ENCODE measurements at regions of chr2 and their contacts with region 1.

Region 1: DNA sequence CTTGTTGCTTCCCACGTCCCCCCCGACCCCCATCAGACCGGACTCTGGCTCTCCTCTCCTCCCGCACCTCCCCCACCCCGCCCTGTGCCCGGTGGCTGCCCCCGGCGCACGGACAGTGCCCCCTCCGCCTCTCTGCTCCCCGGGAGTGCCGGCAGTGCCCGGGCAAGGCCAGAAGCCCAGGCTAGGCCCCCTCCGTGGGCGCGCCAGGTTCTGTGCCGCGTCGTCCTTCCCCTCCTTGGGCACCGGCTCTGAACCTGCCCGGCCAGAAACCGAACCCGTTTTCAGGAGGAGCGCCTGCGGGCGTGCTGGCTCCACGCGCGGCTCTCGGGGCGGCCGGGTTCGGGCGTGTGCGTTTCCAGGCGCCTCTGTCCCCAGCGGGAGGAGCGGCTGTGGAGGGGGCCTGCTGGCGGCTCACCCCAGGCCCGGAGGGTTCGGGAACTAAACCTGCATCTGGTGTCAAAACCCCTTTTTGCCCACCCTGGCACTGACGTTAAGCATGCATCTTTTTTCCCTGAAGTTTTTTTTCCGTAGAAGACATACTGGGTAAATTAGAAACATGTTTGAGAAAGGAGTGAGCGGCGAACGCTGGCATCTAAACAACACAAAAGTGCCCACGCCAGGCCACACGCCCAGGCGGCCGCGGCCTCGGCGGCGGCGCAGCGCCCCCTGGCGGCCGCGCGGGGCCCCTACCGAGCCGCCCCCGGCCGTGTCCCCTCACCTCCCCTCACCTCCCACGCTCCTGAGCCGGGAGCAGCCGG is 123.9 kb upstream of the SLC1A4 start:
- DNase-seq: peak; percentile 63 to 83 (median 72)
- H3K4me3 ChIP-seq: peak overlapping the region; percentile 57
- H3K27ac ChIP-seq: peak overlapping the region; percentile 65 to 68
- H3K4me1 ChIP-seq: peaks cover 1% of the 10 kb centered on the region
- H3K27me3 ChIP-seq: no peaks in the 10 kb centered on the region
- CTCF ChIP-seq: peak; percentile 28 to 92 (median 90)
- EP300 ChIP-seq: no peak
- POLR2A ChIP-seq: peak; percentile 38

Region 2: DNA sequence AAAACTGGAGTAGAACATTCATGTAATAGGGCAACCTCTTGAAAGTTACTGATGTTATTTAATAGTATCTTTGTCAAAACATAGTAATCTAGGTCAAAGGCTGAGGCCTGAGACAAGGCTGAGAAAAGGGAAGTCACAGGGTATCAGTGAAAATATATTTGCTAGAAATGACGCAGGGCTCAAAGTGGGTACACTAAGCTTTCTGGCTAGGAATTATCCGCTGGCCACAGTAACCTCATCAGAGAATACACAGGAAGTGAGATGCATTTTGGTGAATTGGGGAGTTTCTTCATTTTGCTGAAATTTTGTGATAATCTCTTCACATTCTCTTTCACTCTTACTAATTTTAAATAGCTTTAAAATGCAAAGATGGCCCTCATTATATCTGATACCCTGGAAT is 1607.8 kb before region 1 on chr2:
- intact Hi-C with region 1: no loop called
- DNase-seq: no peak
- H3K4me3 ChIP-seq: no peak overlapping the region
- H3K27ac ChIP-seq: no peak overlapping the region
- H3K4me1 ChIP-seq: no peaks in the 10 kb centered on the region
- H3K27me3 ChIP-seq: no peaks in the 10 kb centered on the region
- CTCF ChIP-seq: no peak
- EP300 ChIP-seq: no peak
- POLR2A ChIP-seq: no peak

Region 3: DNA sequence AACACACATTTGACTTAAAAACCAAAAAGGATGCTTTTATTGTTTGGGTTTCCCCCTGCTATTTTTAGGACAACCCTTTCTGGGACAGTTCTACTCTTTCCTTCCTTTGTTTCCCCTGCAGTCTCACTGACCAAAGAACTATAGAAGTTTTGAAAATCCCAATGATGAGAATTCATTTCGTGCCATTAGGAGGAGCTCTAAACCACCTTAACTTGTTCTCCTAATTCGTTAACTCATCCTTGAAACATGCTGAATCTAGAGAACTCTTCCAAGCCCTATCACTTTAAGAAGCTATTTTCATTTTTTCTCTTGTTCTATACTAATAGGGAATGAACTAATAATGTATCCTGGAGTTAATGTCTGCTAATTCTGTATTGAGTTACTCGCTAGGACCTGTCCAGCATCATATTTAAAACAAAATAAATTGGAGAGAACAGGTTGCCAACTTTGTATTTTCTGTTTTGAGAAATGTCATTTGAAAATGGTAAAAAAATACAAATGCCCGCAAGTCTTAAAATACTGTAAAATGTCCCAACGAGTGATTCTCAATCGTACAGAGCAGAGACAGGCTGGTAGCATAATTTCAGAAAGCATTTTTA is 278.3 kb before region 1 on chr2:
- intact Hi-C with region 1: loop called in 3 of 4 experiments (anchors 2 to 5 kb)
- DNase-seq: no peak
- H3K4me3 ChIP-seq: no peak overlapping the region
- H3K27ac ChIP-seq: no peak overlapping the region
- H3K4me1 ChIP-seq: no peaks in the 10 kb centered on the region
- H3K27me3 ChIP-seq: no peaks in the 10 kb centered on the region
- CTCF ChIP-seq: peak; percentile 50 to 75 (median 54)
- EP300 ChIP-seq: no peak
- POLR2A ChIP-seq: no peak

Region 4: DNA sequence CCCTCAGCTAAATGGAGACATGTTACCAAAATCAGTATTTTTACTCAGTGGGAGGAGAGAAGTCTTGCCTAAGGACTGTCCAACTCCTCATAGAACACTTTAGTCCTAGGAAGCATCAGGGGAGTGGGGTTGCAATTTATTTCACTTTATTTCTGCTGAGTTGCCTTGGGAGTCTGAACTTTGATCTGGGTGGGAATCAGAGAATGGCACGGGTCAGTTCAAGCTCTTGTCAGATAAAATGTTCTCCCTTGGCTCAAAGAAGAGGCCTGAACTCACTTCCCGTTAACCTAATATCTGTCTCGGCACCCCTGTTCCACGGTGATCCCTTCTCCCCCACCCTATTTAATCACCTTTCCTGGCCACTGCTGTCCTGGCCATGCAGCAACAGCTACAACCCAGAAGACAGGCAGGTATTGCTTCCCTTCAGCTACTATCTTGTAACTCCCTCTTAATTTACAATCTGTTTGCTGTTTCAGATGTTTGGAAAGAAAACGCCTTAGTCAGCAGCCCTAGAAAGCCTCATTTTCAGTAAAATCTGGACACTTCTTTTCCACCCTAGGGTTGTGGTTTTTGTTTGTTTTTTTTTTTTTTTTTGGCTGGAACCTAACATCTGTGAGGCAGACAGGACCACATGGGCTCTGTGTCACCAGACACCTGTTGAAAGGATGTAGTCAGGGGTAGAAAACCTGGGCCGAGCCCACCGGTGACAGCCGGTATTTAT is 264.1 kb before region 1 on chr2:
- intact Hi-C with region 1: loop called in 1 of 4 experiments (anchors 5 kb)
- DNase-seq: no peak
- H3K4me3 ChIP-seq: no peak overlapping the region
- H3K27ac ChIP-seq: no peak overlapping the region
- H3K4me1 ChIP-seq: peaks cover 2% of the 10 kb centered on the region
- H3K27me3 ChIP-seq: no peaks in the 10 kb centered on the region
- CTCF ChIP-seq: no peak
- EP300 ChIP-seq: no peak
- POLR2A ChIP-seq: no peak

Region 5: DNA sequence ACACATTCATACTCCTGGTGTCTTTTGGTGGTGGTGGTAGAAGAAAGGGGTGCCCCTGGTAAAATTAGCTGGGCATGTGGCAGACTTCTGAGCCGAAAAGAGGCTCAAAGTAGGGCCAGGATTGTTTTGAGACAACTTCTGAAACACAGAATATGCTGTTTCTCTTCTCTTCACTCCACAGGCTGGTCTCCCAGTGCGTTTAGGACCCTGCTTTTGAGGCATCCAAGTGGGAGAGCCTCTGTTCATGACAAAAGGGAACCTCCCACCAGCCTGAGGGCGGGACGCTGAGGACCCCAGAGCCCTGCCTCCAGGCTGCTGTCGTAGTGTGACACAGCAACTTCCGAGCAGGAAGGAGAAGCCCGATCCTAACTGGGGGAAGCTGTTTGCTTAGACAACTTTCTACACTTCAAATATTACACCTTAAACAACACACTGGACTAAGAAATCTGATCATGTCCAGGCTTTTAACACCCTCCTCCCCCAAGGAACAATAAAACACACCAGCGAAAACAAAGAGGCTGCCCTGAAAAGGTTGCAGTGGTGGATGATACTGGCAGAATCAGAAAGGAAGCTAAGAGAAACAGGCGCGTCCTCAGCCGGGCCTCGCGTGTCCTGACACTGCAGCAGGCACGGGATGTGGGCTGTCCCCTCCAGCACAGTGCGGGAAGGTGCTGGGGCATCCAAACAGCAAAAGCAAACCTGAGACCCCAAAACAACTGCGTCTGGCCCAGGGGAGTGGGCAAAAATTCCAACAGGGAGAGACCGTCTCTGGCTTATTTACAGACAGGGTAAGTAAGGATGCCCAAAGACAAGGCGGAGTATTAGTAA is 220.9 kb before region 1 on chr2:
- intact Hi-C with region 1: loop called in 2 of 4 experiments (anchors 2 to 5 kb)
- DNase-seq: peak; percentile 77 to 82 (median 80)
- H3K4me3 ChIP-seq: peak overlapping the region; percentile 46
- H3K27ac ChIP-seq: peak overlapping the region; percentile 53 to 88
- H3K4me1 ChIP-seq: peaks cover 23% of the 10 kb centered on the region
- H3K27me3 ChIP-seq: no peaks in the 10 kb centered on the region
- CTCF ChIP-seq: no peak
- EP300 ChIP-seq: no peak
- POLR2A ChIP-seq: peak; percentile 72

Region 6: DNA sequence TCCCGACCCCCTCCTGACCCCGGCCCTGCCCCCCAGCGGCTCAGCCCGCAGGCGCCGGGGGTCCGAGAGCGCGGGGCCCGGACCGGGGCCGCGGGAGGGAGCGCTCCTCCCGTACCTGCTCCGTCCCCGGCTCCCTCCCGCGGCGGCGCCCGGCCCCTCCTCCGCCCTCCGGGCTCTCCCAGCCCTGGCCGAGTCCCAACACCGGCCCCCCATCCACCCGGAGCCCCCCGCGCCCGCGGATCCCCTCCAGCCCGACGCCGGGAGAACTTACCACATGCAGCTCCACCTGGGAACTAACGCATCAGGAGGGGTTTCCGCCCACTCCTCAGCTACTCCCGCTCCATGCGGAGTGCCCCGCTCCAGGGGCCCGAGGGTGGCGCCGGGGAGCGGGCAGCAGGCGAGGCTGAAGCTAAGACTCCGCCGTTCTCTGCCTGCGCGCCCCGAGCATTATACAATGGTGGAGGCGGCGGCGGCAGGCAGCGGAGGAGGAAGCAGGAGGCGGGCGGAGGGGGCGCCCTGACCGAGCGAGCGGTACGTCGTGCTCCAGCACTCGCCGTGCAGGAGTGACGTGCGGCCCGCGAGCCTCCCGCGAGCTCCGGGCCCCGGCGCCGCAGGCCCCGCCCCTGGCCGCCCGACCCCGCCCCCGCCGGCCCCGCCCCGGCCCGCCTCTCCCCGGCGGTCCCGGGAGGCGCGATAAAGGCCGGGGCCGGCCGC is 211.7 kb before region 1 on chr2 and contains the start of gene SERTAD2:
- intact Hi-C with region 1: loop called in 3 of 4 experiments (anchors 2 to 5 kb)
- DNase-seq: peak; percentile 87 to 93 (median 91)
- H3K4me3 ChIP-seq: peak within 1 kb of the TSS; percentile 85
- H3K27ac ChIP-seq: peak within 1 kb of the TSS; percentile 94 to 98
- H3K4me1 ChIP-seq: peaks cover 9% of the 10 kb centered on the region
- H3K27me3 ChIP-seq: no peaks in the 10 kb centered on the region
- CTCF ChIP-seq: no peak
- EP300 ChIP-seq: no peak
- POLR2A ChIP-seq: peak; percentile 72
- total RNA-seq, gene SERTAD2: 11.0 to 26.8 (median 21.8) TPM

Region 7: DNA sequence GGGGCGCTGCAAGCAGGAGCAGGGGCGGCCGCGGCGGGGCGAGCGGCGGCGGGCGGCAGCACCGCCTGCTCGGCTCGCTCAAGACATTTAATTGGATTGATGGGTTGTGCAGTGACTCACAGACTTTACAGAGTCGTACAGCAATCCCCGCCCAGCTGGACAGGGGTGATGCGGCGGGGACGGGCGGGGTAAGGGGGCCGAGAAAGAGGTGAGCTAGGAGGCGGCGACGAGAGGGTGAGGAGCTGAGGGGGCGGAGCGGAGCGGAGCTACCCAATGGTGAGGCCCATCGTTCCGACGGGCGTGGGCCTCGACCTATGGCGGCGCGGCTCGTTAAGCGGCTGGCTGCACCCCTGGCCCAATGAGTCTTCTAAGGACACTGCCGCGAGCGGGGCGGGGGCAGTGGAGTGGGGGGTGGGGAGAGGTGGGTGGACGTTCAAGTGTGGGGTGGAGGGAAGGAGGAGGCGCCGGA is 114.4 kb before region 1 on chr2:
- intact Hi-C with region 1: loop called in 3 of 4 experiments (anchors 5 to 10 kb)
- DNase-seq: peak; percentile 99
- H3K4me3 ChIP-seq: peak overlapping the region; percentile 74
- H3K27ac ChIP-seq: peak overlapping the region; percentile 74 to 96
- H3K4me1 ChIP-seq: peaks cover 7% of the 10 kb centered on the region
- H3K27me3 ChIP-seq: no peaks in the 10 kb centered on the region
- CTCF ChIP-seq: no peak
- EP300 ChIP-seq: peak; percentile 7
- POLR2A ChIP-seq: peak; percentile 97

Region 8: DNA sequence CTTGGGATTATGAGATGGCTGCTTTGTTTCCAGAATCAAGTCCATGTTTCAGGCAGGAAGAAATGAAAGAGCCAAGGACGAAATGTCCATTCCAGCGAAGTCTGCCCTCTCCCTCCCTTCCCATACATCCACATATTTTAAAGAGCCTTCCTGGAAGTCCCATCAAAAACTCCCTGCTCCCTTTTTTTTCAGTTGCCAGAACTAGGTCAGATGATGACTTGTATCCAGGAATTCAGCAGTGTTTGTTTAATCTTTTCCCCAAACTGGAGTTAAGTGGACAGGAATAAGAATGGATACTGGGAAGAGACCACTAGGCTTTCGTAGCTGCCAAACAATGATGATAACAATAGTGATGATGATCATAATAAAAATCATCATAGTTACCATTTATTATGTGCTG is 1768.4 kb after region 1 on chr2:
- intact Hi-C with region 1: no loop called
- DNase-seq: no peak
- H3K4me3 ChIP-seq: no peak overlapping the region
- H3K27ac ChIP-seq: no peak overlapping the region
- H3K4me1 ChIP-seq: no peaks in the 10 kb centered on the region
- H3K27me3 ChIP-seq: no peaks in the 10 kb centered on the region
- CTCF ChIP-seq: no peak
- EP300 ChIP-seq: no peak
- POLR2A ChIP-seq: no peak

Measured in ovary (tissue), 10 donors.